Activated naive CD4-positive, alpha-beta T cell treated with anti-CD3 and anti-CD28 coated beads, Interleukin-2, amount 10 ng/mL, durations not matched to agents 7 days and 5 days (primary cell): ENCODE measurements at regions of chr12 and their contacts with region 1.

Region 1: GRCh38 chr12:4857472-4858291 is 52.0 kb upstream of the KCNA1 start:
- DNase-seq: peak; percentile 83
- H3K4me3 Mint-ChIP-seq: no peak overlapping the region
- H3K27ac Mint-ChIP-seq: no peak overlapping the region
- H3K4me1 Mint-ChIP-seq: peaks cover 17% of the 10 kb centered on the region
- H3K27me3 Mint-ChIP-seq: peaks cover 77% of the 10 kb centered on the region

Region 2: GRCh38 chr12:4807116-4807783 is 50.4 kb before region 1 on chr12:
- CTCF ChIA-PET with region 1: interaction called, 13 read pairs
- DNase-seq: no peak
- H3K4me3 Mint-ChIP-seq: no peak overlapping the region
- H3K27ac Mint-ChIP-seq: peak overlapping the region; percentile 15
- H3K4me1 Mint-ChIP-seq: peaks cover 42% of the 10 kb centered on the region
- H3K27me3 Mint-ChIP-seq: peaks cover 62% of the 10 kb centered on the region

Region 3: GRCh38 chr12:4819654-4820053 is 38.0 kb before region 1 on chr12:
- CTCF ChIA-PET with region 1: interaction called, 18 read pairs
- DNase-seq: no peak
- H3K4me3 Mint-ChIP-seq: no peak overlapping the region
- H3K27ac Mint-ChIP-seq: no peak overlapping the region
- H3K4me1 Mint-ChIP-seq: peaks cover 23% of the 10 kb centered on the region
- H3K27me3 Mint-ChIP-seq: peaks cover 40% of the 10 kb centered on the region

Region 4: GRCh38 chr12:4829793-4830162 is 27.9 kb before region 1 on chr12:
- CTCF ChIA-PET with region 1: interaction called, 14 read pairs
- DNase-seq: no peak
- H3K4me3 Mint-ChIP-seq: peak overlapping the region; percentile 75
- H3K27ac Mint-ChIP-seq: peak overlapping the region; percentile 97
- H3K4me1 Mint-ChIP-seq: peaks cover 65% of the 10 kb centered on the region
- H3K27me3 Mint-ChIP-seq: no peaks in the 10 kb centered on the region

Region 5: DNA sequence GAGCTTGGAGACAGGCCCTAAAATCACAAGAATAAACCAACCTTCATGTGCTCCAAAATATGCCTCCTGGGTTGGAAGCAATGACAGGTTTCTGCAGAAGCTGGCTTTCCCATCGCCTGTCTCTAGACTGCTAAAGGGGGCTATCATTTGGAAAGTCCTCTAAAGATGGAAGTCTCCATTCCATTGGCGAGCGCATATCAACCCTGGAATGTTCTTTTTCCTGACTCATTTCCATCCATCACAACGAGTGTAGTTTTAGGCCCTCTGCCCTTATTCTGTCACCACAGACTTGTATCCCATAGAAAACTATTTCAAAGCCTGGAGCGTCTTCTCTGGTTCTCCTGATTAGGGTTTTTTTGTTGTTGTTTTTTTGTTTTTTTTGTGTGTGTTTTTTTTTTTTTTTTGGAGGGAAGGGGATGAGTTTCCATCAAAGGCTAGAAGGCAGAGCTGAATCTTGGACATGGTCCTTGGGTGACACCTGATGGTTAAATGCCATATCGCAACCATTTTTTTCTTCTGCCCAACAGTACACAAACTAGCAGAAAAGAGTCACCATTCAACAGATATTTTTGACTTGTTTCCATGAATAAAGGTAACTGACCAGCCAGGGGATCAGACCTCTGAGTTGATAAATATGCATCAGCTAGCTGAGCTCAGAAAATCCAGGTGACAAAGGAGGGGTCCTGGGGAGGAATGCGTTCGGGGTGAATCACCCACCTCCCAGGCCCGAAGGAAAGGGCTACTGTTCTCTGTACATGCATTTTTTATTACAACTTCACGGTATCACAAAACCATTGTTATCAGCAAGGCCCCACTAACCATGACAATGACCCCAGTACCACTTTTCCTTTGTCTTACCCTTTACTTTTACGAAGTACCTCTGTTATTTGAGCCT is 226.5 kb after region 1 on chr12:
- CTCF ChIA-PET with region 1: interaction called, 52 read pairs
- DNase-seq: peak; percentile 38
- H3K4me3 Mint-ChIP-seq: no peak overlapping the region
- H3K27ac Mint-ChIP-seq: no peak overlapping the region
- H3K4me1 Mint-ChIP-seq: no peaks in the 10 kb centered on the region
- H3K27me3 Mint-ChIP-seq: peaks cover 4% of the 10 kb centered on the region